Activated T-helper 2 cell treated with anti-CD3 and anti-CD28 coated beads, Interferon-gamma antibody, Interleukin-2, Interleukin-4, amounts not matched to agents 10 μg/mL and 5 μg/mL and 100 μg/mL, durations not matched to agents 14 hours and 24 hours and 36 hours (primary cell): ENCODE measurements at regions of chr12 and their contacts with region 1.

Region 1: DNA sequence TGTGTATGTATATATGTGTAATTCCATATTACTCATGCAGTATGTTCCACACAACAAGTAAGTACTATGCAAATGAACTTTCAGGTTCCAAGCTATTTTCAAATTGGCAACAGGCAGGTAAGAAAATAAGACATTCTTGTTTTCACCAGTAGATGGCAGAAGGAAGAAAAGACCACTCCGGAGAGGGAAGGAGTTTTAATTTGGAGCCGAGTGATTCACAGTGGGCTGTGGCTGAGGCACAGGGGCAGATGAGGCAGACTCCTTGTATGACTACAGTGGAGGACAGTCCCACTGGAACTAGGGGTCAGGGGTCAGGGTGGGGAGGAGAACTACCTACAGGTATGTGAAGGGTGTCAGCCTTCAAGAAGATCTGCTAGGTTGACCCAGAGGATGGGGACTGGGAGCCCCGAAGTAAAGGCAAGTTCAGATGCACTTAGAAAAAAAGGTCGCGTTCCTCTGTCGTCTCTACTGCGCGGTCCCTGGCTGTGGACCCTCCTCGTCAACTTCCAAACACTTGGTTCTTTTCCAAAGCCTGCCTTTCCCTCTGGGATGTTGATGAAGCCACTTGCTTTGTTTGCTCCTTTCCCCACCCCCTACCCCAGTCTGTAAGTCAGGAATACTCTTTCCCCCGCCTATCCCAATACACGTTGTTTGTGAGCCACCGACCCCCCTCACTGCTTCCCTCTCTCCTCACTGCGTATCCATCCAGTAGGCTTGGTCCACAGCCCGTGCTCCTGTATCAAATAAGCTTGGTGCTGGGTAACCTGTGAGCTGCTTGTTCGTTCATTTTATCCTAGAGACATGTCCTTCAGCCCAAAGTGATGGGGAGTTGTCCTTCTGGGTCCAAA is 24.1 kb downstream of the DDX47 start:
- DNase-seq: no peak
- H3K4me3 Mint-ChIP-seq: no peak overlapping the region
- H3K27ac Mint-ChIP-seq: peak overlapping the region; percentile 60
- H3K4me1 Mint-ChIP-seq: peaks cover 17% of the 10 kb centered on the region
- H3K27me3 Mint-ChIP-seq: no peaks in the 10 kb centered on the region

Region 2: GRCh38 chr12:12899530-12900380 is 62.5 kb after region 1 on chr12:
- intact Hi-C with region 1: loop called (anchors 5 kb)
- DNase-seq: no peak
- H3K4me3 Mint-ChIP-seq: no peak overlapping the region
- H3K27ac Mint-ChIP-seq: peak overlapping the region; percentile 40
- H3K4me1 Mint-ChIP-seq: peaks cover 11% of the 10 kb centered on the region
- H3K27me3 Mint-ChIP-seq: peaks cover 23% of the 10 kb centered on the region